GM10248 (cell line): ENCODE measurements at regions of chr6 and their contacts with region 1.

Region 1: DNA sequence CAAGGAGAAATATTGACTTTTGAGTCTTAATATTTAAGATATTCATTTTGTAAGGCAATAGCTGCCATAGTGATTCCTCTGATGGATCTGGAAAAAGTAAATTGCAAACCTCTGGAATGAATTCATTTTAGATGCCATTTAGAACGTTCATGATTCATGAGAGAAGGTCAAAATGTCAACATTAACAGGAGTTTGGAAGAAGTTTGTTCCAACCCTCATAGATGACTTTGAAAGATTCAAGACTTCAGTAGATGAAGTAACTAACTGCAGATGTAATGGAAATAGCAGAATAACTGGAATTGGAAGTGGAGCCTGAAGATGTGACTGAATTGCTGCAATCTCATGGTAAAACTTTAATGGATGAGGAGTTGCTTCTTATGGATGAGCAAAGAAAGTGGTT is 100.9 kb upstream of the CCN2 start:
- DNase-seq: no peak
- CTCF ChIP-seq: no peak

Region 2: DNA sequence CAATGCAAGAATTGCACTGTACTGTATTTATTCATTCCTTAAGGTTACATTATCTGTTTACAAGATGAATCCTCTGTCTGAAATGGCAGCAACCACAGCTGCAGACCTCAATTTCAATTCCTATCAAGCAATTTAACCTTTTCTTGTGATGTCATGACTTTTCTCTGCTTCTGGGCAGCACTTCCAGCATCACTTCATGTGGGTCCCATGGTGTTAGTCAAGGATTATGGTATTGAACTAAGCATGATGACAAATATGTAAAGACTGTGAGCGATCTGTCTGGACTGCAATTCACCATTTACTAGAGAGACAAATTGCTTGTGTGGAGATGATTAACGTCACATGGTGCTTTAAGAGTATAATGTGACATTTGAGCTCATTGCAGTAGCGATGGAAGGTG is 10.4 kb before region 1 on chr6:
- CTCF ChIA-PET with region 1: interaction called, 11 read pairs
- POLR2A ChIA-PET with region 1: no interaction called
- DNase-seq: no peak
- CTCF ChIP-seq: no peak

Region 3: GRCh38 chr6:132084833-132085509 is 32.9 kb after region 1 on chr6:
- CTCF ChIA-PET with region 1: no interaction called
- POLR2A ChIA-PET with region 1: no interaction called
- DNase-seq: peak; percentile 15
- CTCF ChIP-seq: no peak

Region 4: DNA sequence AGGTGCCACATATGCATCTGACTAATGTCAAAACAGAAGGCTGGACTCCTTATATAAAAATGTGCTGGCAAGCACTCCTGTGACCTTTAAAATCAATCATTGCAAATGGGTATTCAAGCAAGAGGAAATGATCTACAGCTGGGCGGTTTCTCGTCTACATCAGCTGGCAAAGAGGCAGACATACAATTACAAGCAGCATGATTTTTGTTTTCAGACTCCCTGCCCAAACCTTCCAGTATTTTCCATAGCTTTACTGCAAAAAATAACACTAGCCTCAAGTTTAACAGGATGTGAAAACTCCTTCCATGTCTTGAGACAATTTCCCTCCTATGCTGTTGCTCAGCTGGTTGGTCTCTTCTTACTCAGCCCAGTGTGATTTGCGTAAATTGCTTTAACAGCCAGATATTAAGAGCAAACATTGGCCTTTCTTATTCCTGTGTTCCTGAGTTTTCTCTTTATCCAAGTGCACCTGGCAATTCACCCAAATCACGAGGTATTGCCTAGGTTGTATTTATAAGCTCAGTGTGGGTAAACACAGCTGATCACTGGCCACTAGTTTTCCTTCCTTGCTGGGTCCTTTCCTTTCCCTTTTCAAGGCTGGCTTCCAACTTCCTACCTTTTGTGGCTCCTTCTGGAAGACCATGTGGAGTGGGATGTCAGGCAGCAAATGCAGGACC is 218.8 kb after region 1 on chr6:
- CTCF ChIA-PET with region 1: no interaction called
- POLR2A ChIA-PET with region 1: no interaction called
- DNase-seq: no peak
- CTCF ChIP-seq: no peak